Astrocyte of the cerebellum (primary cell): ENCODE measurements at regions of chr6 and their contacts with region 1.

Region 1: DNA sequence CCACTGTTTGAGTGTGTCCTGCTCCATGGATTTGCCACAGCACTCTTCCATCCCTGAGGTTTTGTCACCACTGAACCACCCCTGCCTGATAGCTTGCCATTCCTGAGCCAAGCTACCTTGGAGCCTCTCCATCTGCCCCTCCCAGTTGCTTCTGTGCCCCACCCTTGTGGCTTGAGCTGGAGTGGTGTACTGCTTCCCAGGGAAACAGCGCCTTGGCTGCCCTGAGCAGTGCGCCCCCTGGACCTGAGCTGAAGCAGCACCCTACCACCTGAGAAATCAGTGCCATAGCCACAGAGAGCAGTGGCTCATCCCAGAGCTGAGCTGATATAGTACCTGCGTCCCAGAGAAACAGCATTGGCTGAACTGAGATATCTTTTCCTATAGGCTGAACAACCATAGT is 40.3 kb downstream of the IL22RA2 start:
- DNase-seq: no peak
- H3K4me3 ChIP-seq: no peak overlapping the region
- CTCF ChIP-seq: no peak

Region 2: DNA sequence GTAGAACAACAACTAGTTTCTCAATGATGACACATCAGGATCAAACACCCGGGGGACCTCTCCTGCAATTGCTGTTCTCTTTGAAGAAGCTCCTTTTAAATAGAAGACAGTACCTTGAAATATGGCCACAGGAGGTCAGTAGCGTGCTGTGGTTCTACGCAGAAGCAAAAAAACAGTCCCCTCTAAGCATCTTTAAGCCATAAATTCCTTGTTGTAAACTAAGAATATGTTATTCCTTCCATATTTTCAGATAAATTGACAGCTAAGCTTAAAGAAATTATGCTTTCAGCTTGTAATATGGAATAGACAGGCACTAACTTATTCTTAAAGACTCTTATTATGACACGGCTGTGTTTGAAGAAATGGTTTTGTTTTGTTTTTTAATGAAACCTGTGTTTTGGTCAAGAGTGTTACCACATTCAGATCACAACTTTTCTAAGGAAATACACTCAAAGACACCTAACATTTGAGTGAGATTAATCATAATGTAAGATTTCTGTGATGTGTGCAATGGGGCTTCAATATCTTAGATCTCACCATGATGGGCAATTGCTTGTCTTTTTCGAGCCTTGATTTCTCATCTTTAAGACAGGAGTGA is 38.6 kb before region 1 on chr6:
- in situ Hi-C with region 1: loop called (anchors 5 kb)
- DNase-seq: peak; percentile 68
- H3K4me3 ChIP-seq: no peak overlapping the region
- CTCF ChIP-seq: peak; percentile 69

Region 3: GRCh38 chr6:137171824-137172705 is 38.9 kb after region 1 on chr6:
- in situ Hi-C with region 1: no loop called
- DNase-seq: no peak
- H3K4me3 ChIP-seq: no peak overlapping the region
- CTCF ChIP-seq: no peak

Region 4: DNA sequence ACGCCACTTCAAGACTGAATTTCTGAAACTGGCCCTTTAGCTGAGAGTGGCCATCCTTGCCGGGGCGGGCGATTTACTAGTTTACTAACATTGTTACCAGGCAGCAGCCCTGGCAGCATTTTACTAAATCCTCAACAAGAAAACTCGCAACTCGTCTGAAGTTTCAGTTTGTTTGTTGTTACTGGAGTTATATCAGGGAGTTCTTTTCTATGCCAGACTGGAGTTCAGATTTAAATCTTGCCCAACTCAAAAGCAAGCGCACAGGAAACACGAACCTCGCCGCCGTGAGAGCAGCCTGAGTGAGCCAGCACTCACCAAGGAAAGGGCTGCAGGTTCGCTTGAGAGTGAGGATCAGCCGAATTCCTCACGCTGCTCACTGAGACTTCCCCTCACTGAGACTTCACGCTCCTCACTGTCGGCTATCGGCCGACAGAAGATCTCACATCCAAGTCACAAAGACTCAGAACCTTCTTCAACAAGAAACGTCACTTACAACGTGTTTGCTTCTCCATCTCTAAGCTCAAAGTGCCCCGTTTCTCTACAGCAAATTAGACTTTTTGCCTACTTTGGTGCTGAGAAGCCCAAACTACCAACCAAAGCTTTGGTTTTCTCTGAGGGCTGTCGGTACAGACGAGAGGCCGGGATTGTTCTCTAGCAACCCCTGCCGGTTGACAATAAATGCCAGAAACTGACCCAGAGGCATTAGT is 282.2 kb after region 1 on chr6:
- in situ Hi-C with region 1: no loop called
- DNase-seq: peak; percentile 53
- H3K4me3 ChIP-seq: peak overlapping the region; percentile 31
- CTCF ChIP-seq: peak; percentile 81